Activated naive CD4-positive, alpha-beta T cell treated with anti-CD3 and anti-CD28 coated beads for 36 hours (primary cell): ENCODE measurements at regions of chr18 and their contacts with region 1.

Region 1: DNA sequence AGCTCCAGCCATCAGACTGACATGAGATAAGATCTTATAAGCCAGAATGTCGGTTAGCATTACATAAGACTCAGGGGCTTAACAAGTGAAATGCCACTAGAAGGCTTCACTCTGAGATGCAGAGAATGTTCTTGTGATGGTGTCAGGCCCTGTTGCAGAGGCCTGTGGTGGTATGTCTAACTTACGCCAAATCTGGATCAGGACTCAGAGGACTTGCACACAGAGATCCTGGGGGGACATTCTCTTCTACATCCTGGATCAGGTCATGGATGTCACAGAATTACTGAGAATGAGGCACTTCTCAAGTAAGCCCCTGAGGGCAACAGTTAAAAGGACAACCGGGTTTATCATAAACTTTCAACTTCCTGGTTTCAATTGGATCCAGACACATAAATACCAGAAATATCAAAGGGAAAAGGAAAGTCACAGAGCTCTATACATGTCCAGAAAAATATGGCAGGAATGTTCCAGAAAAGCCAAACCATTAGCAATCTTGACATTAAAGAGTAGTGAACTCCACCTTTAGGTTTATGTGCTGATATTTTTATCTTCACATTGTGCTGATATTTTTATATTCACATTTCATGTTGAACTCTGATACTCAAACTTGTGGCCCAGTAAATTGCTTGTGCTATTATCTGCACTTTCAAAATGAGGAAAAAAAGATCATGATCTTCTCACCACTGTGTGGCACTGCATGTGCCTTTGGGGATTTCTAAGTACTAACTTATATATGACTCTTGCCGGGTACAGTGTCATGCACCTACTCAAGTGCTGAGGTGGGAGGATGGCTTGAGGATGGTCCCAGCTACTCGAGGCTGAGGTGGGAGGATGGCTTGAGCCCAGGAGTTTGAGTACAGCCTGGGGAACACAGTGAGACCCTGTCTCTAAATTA is 137.5 kb upstream of the RNF152 start:
- DNase-seq: no peak
- H3K4me3 Mint-ChIP-seq: no peak overlapping the region
- H3K27ac Mint-ChIP-seq: no peak overlapping the region
- H3K4me1 Mint-ChIP-seq: peaks cover 21% of the 10 kb centered on the region
- H3K27me3 Mint-ChIP-seq: no peaks in the 10 kb centered on the region

Region 2: DNA sequence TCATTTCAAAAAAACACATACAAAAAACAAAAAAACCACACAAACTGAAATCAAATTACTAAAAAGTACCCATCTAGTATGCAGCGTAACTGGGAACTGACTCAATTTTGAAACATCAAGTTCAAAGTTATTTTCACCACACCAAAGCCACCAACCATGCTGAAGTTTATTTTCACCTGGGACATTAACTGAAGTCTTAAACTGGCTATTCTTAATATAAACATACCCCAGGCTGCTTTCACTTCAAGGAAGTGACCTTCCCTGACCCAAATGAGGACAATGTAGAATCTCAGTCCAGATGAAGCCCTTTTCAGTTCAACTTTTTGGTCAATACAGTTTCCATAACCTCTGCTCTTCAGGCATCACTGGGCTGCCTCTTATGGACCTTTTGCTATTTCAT is 71.9 kb after region 1 on chr18:
- CTCF ChIA-PET with region 1: no interaction called
- intact Hi-C with region 1: loop called (anchors 2 kb)
- DNase-seq: no peak
- H3K4me3 Mint-ChIP-seq: no peak overlapping the region
- H3K27ac Mint-ChIP-seq: no peak overlapping the region
- H3K4me1 Mint-ChIP-seq: peaks cover 4% of the 10 kb centered on the region
- H3K27me3 Mint-ChIP-seq: no peaks in the 10 kb centered on the region